AG04450 (cell line): ENCODE measurements at regions of chr7 and their contacts with region 1.

Region 1: DNA sequence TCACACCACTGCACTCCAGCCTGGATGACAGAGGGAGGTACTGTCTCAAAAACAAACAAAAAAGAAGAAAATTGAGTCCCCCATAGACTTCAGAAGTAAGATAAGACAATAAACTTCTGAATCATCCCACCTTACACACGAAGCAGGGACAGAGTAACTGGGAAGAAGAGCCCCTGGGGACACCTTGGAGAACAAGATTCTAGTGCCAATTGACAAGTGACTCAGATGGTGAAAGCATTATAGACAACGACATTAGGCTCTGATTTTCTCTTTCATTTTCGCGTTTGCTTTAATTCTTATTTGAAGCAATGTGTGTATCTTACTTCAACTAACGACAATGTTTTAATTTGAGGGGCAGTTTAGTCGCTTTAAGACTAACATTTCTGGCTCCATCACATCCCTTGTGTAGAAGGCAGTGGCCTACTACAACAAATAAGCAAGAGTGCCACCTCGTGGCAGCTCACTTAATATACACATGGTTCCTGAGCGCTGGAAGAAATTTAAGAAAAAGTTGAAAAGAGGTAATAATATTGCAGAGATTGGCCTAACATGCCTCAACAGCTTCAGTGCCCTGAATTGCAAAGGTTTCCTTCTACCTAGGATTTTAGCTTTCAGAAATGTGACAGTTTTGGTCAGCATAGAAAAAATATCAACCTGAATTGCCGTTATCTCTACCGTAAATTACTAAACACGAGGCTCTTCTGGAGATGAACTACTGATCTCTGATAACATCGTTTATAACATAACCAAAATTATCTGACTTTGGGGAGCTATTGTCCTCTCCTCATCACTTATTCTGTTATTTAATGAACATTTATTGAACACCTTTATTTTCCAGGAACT is 36.7 kb downstream of the ASNS start:
- DNase-seq: peak; percentile 29
- H3K4me3 ChIP-seq: no peak overlapping the region
- H3K27ac ChIP-seq: no peak overlapping the region
- H3K27me3 ChIP-seq: peaks cover 4% of the 10 kb centered on the region
- CTCF ChIP-seq: peak; percentile 70

Region 2: GRCh38 chr7:95916573-95917297 is 1918.8 kb before region 1 on chr7:
- CTCF ChIA-PET with region 1: interaction called, 14 read pairs
- POLR2A ChIA-PET with region 1: no interaction called
- DNase-seq: peak; percentile 42
- H3K4me3 ChIP-seq: no peak overlapping the region
- H3K27ac ChIP-seq: no peak overlapping the region
- H3K27me3 ChIP-seq: no peaks in the 10 kb centered on the region
- CTCF ChIP-seq: peak; percentile 93

Region 3: DNA sequence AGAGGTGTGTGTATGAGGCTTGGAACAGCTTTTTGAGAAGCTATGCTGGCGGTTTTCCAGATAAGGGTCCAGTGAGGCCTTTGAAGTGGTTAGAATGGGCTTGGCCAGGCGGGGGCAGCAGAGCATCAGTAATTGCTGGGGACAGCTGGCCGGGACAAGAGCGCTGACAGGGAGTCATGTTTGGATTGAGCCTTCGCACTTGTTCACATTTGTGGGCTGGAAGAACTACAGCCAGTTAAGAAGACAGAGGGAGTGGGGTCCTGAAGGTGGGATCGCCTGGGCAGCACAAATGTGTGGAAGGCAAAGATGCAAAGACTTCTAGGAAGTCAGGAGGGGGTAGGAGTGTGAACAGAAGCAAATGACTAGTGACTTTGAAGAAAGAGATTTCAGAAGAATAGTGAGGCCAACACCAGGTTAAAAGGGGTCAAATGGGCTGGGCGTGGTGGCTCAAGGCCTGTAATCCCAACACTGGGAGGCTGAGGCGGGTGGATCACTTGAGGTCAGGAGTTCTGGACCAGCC is 730.7 kb before region 1 on chr7:
- CTCF ChIA-PET with region 1: interaction called, 40 read pairs
- POLR2A ChIA-PET with region 1: no interaction called
- DNase-seq: peak; percentile 32
- H3K4me3 ChIP-seq: no peak overlapping the region
- H3K27ac ChIP-seq: no peak overlapping the region
- H3K27me3 ChIP-seq: peaks cover 3% of the 10 kb centered on the region
- CTCF ChIP-seq: peak; percentile 77

Region 4: DNA sequence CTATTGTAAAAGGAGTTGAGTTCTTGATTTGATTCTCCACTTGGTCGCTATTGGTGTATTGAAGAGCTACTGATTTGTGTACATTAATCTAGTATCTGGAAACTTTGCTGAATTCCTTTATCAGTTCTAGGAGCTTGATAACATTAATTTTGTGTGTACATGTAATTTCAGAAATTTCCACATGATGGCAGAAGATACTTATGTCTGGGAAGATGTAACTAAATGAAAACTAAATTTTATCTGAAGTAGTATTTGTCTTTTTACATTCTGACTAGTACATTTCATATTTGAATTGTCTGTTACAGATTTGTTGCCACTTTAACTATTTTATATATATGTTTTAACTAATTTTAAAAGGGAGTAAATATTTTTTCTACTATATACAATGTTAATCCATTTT is 690.4 kb before region 1 on chr7:
- CTCF ChIA-PET with region 1: interaction called, 27 read pairs
- POLR2A ChIA-PET with region 1: no interaction called
- DNase-seq: no peak
- H3K4me3 ChIP-seq: no peak overlapping the region
- H3K27ac ChIP-seq: no peak overlapping the region
- H3K27me3 ChIP-seq: no peaks in the 10 kb centered on the region
- CTCF ChIP-seq: peak; percentile 59

Region 5: GRCh38 chr7:97819161-97819560 is 16.4 kb before region 1 on chr7:
- CTCF ChIA-PET with region 1: interaction called, 24 read pairs
- POLR2A ChIA-PET with region 1: no interaction called
- DNase-seq: no peak
- H3K4me3 ChIP-seq: no peak overlapping the region
- H3K27ac ChIP-seq: no peak overlapping the region
- H3K27me3 ChIP-seq: no peaks in the 10 kb centered on the region
- CTCF ChIP-seq: no peak

Region 6: DNA sequence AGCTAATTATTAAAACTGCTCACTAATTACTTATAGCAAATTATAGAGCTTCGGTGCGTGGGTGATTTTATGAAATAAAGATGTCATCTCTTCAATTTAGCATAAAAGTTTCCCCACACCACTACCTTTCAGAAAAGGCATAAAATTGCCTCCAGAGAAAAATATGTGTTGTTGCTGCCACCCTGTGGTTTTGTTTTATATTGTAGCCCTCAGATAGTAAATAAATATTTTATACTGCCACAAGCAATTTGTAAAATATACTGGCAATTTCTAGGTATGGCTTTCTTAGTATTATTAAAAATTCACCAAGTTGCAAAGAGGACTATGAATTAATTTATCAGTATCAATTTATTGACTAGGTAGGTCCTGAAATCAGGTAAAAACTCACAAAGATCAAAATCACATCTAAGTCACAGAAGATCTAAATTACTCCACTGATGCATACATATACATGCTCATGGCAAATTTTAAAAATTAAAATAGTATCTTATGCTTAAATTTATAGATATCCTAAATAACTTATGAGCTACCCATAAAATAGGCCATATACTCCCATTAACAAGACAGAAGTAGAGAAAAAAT is 10.2 kb after region 1 on chr7:
- CTCF ChIA-PET with region 1: interaction called, 50 read pairs
- POLR2A ChIA-PET with region 1: no interaction called
- DNase-seq: no peak
- H3K4me3 ChIP-seq: no peak overlapping the region
- H3K27ac ChIP-seq: no peak overlapping the region
- H3K27me3 ChIP-seq: no peaks in the 10 kb centered on the region
- CTCF ChIP-seq: peak; percentile 52

Region 7: DNA sequence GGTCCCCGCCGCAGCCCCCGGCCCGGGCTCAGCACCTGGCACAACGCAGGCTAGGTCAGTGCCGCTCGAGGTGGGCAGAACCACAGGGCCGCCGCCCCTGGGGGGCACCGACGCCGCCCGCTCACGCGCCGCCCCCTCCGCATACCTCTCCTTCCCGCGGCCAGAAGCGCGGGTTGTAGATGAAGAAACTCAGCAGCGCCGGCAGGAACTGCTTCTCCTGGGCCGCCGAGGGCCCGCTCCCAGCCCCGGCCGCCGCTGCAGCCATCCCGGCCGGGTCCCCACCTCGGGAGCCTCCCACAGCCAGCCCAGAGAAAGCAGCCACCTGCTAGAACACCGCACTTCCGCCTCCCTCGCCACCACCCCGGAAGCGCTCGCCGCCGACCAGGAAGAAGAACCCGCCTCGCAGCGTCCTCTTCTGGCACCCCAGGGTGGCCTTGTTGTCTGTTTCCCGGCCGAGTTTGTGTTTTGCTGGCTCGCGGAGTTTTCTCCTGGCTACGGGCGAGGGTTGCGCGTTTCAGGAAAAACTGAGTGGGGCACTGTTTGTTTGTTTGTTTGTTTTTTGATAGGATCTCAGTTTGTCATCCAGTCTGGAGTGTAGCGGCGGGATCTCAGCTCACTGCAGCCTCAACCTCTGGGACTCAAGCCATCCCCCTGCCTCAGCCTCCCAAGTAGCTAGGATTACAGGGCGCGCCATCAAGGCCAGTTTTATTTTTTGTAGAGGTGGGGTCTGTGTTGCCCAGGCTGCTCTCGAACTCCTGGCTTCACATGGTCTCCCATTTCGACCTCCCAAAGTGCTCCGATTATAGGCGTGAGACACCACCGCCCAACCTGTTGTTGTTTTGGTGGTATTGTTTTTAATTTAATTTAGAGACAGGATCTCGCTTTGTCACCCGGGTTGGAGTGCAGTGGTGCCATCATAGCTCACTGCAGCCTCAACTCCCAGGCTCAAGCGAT is 136.8 kb after region 1 on chr7:
- CTCF ChIA-PET with region 1: no interaction called
- POLR2A ChIA-PET with region 1: no interaction called
- DNase-seq: peak; percentile 15
- H3K4me3 ChIP-seq: peak overlapping the region; percentile 81
- H3K27ac ChIP-seq: peak overlapping the region; percentile 21
- H3K27me3 ChIP-seq: no peaks in the 10 kb centered on the region
- CTCF ChIP-seq: peak; percentile 40